Common myeloid progenitor, CD34-positive (primary cell): ENCODE measurements at regions of chr5 and their contacts with region 1.

Region 1: GRCh38 chr5:139633295-139634027 is 14.7 kb upstream of the CXXC5 start:
- DNase-seq: peak; percentile 72 to 82 (median 79)
- H3K4me3 ChIP-seq: no peak overlapping the region
- H3K27ac ChIP-seq: no peak overlapping the region
- H3K4me1 ChIP-seq: peaks cover 9 to 49% (median 37%) of the 10 kb centered on the region in 4 experiments
- H3K27me3 ChIP-seq: no peaks in the 10 kb centered on the region

Region 2: DNA sequence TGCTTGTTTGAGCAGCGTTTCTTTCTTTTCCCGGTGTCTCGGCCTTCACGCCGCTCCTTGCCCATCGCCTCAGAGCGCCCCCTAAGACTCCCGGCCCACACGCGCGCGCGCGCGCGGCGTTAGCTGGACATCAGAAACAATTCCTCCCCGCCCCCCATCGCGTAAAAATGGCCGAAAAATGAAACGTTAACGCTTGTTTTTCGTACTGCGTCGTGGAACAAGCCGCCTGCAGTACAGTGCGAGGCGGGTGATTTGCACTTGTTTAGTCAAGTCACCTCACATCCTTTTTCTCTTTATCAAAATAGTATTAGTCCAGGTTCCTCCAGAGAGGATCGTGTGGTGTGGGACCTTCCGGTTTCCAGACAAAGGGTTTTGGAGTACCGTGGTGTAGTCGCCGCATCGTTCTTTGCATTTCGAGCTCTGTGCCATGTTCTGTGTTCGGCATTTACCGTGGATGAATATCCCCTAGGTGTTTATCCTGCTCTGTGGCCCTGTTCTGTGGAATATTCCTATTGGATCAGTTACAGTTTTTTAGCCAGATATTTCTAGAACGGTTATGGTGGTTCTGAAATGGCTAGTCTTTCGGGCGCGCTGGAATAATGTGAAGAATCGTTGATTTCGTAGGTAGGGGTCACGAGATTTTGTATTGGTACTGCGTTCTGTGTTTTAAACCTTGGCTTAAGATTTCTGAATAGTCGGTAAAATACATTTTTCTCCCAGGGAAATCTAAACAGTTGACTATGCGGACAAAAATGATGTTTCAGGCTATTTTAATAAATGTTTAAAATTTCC is 338.9 kb before region 1 on chr5:
- CTCF ChIA-PET with region 1: no interaction called
- POLR2A ChIA-PET with region 1: no interaction called
- DNase-seq: peak; percentile 66 to 77 (median 70)
- H3K4me3 ChIP-seq: peak overlapping the region; percentile 81 to 100 (median 90)
- H3K27ac ChIP-seq: peak overlapping the region; percentile 99
- H3K4me1 ChIP-seq: peaks cover 13 to 46% (median 25%) of the 10 kb centered on the region in 4 experiments
- H3K27me3 ChIP-seq: no peaks in the 10 kb centered on the region

Region 3: DNA sequence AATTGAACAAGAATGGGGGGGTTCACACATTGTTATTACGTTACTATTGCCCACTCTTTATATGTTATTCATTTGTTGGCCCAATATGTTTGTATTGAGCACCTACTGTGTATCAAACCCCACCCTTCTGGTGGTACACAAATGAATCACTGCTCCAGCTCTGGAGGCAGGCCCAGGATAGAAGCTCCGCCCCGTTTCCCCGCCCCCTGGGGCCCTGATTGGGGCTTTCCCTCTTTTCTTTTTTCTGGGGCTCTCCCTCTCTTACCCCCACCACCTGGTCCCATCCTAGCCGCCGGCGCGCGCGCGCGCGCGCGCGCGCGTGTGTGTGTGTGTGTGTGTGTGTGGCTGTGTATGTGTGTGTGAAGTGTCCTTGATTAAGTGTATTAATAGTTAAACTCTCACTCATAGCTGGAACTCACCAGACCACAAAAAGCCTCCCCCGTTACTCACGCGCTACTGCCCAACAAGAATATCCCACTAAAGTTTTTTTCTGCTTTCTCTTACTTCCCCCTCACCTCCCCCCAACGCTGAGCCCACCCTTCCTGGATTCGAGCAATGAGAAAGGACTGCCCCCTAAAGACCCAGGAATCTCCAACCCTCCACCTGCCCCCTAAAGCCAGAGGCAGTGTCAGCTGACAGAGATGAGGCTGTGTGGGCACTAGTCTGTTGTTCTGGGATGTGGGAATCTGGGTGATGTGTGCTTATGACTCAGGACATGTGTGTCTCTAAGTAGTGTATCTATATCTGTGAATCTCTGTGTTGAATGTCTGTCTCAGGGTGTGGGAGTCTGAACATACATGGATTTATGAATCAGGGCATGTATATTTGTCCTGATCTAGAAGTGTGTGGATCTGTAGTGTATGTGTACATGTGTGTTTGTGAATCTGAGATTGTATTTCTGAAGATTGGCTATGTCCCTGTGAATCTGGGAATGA is 18.7 kb after region 1 on chr5:
- CTCF ChIA-PET with region 1: interaction called, 229 read pairs
- POLR2A ChIA-PET with region 1: interaction called, 83 read pairs
- DNase-seq: peak in 2 of 3 donors; percentile 72 to 78
- H3K4me3 ChIP-seq: peak overlapping the region in 6 of 7 experiments; percentile 27 to 95 (median 49)
- H3K27ac ChIP-seq: peak overlapping the region in 1 of 2 experiments; percentile 65
- H3K4me1 ChIP-seq: peaks cover 15 to 74% (median 71%) of the 10 kb centered on the region in 4 experiments
- H3K27me3 ChIP-seq: no peaks in the 10 kb centered on the region

Region 4: GRCh38 chr5:139684881-139685749 is 51.7 kb after region 1 on chr5:
- CTCF ChIA-PET with region 1: interaction called, 211 read pairs
- POLR2A ChIA-PET with region 1: interaction called, 22 read pairs
- DNase-seq: no peak
- H3K4me3 ChIP-seq: no peak overlapping the region
- H3K27ac ChIP-seq: no peak overlapping the region
- H3K4me1 ChIP-seq: peaks cover 2 to 77% (median 64%) of the 10 kb centered on the region in 4 experiments
- H3K27me3 ChIP-seq: no peaks in the 10 kb centered on the region

Region 5: GRCh38 chr5:139711067-139711905 is 77.8 kb after region 1 on chr5:
- CTCF ChIA-PET with region 1: interaction called, 118 read pairs
- POLR2A ChIA-PET with region 1: interaction called, 39 read pairs
- DNase-seq: peak; percentile 79 to 91 (median 86)
- H3K4me3 ChIP-seq: peak overlapping the region; percentile 32 to 82 (median 63)
- H3K27ac ChIP-seq: peak overlapping the region; percentile 61 to 79
- H3K4me1 ChIP-seq: peaks cover 0 to 54% (median 39%) of the 10 kb centered on the region in 4 experiments
- H3K27me3 ChIP-seq: no peaks in the 10 kb centered on the region

Region 6: DNA sequence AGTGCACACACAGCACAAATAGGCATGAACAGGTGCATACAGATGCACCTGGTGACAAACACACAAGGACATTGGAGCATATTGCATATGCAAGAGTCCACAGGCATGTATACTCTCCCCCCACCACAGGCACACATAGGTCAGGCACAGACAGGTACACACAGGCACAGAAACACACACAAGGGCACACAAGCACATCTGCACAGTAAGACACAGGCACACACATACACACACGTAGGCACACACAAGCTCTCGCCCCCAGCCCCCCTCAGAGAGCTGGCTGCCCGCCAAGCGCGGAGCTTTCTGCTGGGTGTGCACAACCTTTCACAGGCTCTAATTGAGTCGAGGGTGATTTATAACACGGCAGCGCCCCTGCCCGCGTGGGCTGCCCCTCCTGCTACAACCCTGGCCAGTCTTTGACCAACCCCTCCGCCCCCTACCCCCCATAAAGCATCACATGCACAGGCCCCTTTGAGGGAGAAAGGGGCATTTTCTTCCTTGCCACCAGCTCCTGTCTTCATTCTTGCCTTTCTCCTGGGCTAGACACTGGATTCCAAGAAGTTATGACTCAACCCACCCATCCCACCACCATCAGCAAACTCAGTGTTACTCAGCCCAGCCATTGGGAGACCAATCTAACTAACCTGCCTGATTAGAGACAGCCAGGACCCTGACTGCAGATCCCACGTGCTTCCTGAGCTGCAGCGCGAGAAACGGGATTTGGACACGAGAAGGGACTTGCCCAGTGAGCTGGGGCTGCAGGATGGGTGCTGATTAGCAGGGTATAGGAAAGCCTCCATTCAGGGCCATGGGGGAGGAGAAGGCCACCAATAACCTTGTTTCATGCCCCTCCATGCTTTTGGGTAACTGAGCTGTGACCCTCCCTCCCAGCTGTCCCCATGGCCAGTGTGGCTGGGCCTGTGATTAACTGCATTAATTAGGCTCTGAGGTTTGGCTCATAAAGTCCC is 119.3 kb after region 1 on chr5:
- CTCF ChIA-PET with region 1: interaction called, 15 read pairs
- POLR2A ChIA-PET with region 1: no interaction called
- DNase-seq: no peak
- H3K4me3 ChIP-seq: no peak overlapping the region
- H3K27ac ChIP-seq: no peak overlapping the region
- H3K4me1 ChIP-seq: peaks cover 0 to 23% (median 19%) of the 10 kb centered on the region in 4 experiments
- H3K27me3 ChIP-seq: peaks cover 0 to 91% (median 41%) of the 10 kb centered on the region in 5 experiments

Region 7: GRCh38 chr5:139828207-139828895 is 194.9 kb after region 1 on chr5:
- CTCF ChIA-PET with region 1: no interaction called
- POLR2A ChIA-PET with region 1: no interaction called
- DNase-seq: no peak
- H3K4me3 ChIP-seq: no peak overlapping the region
- H3K27ac ChIP-seq: no peak overlapping the region
- H3K4me1 ChIP-seq: no peaks in the 10 kb centered on the region
- H3K27me3 ChIP-seq: peaks cover 0 to 11% (median 6%) of the 10 kb centered on the region in 5 experiments